ENCODE measurements at regions of chr1 and their contacts with region 1.

Region 1: DNA sequence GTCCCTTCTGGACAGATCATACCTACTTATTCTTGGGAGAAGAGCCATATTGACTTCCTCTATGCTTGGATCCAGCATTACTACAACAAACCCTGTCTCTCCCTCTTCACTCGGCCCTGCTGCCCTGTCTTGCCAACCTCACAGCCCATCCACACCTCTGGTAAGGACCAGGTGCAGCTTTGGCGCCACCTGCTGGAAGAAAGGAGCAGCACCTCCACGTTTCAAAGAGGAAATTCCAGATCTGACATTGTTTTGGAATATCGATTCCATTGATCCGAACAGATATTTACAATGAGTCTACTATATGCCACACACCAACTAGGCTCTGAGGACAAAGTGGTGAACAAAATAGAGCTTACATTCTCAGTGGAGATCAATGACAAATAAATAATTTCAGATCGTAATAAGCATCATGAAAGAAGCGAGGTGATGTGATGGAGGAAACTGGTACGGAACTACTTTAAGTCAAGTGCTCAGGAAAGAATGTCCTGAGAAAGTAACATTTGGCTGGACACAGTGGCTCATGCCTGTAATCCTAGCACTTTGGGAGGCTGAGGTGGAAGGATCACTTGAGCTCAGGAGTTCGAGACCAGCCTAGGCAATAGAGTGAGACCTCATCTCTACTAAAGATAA is 18.7 kb downstream of the MFSD2A start:
- DNase-seq: peak; percentile 78
- ATAC-seq: peak; percentile 69
- H3K4me3 Mint-ChIP-seq: no peak overlapping the region
- H3K27ac Mint-ChIP-seq: no peak overlapping the region
- H3K4me1 Mint-ChIP-seq: no peaks in the 10 kb centered on the region
- H3K27me3 Mint-ChIP-seq: no peaks in the 10 kb centered on the region

Region 2: DNA sequence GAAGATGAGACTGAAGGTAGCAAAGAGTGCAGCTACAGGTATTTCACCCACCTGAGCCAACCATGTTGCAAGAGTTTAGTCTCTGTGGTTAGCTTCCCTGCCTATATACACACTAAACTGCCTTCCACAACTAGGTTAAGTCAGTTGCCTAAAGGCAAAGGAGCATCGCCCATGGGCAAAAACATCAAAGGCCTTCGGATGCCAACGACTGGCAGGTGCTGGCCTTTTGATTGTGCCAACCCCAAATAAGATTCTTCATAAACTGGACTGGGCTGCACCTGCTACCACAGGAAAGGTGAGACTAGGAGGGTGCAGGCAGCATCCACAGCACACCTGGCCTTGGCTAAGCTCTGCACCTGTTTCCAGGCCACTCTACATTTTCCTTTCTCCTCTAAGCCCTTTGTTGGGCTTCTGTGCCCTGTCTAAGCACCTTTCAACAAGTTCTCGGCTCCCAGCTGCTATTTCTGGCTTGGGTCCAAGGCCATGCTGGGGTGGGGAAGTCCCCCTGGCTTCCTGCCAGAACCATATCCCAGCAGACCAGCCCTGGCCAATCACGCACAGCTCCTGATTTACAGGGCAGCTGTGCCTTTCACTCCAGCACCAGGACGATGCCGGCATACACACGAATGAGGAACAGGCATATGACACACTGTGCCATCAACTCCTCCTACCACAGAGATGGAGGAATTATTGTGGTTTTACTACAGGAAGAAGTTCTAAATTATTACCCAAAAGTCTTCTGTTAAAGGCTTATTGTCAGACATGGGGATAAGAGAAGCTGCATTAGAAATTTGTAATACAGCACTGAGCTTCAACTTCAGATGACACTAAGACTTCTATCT is 128.1 kb before region 1 on chr1:
- CTCF ChIA-PET with region 1: interaction called, 14 read pairs
- DNase-seq: peak; percentile 75
- ATAC-seq: peak; percentile 77
- H3K4me3 Mint-ChIP-seq: no peak overlapping the region
- H3K27ac Mint-ChIP-seq: peak overlapping the region; percentile 74
- H3K4me1 Mint-ChIP-seq: peaks cover 36% of the 10 kb centered on the region
- H3K27me3 Mint-ChIP-seq: no peaks in the 10 kb centered on the region

Region 3: GRCh38 chr1:39907528-39908453 is 65.8 kb before region 1 on chr1:
- CTCF ChIA-PET with region 1: interaction called, 28 read pairs
- DNase-seq: no peak
- ATAC-seq: no peak
- H3K4me3 Mint-ChIP-seq: no peak overlapping the region
- H3K27ac Mint-ChIP-seq: no peak overlapping the region
- H3K4me1 Mint-ChIP-seq: peaks cover 2% of the 10 kb centered on the region
- H3K27me3 Mint-ChIP-seq: peaks cover 52% of the 10 kb centered on the region

Region 4: DNA sequence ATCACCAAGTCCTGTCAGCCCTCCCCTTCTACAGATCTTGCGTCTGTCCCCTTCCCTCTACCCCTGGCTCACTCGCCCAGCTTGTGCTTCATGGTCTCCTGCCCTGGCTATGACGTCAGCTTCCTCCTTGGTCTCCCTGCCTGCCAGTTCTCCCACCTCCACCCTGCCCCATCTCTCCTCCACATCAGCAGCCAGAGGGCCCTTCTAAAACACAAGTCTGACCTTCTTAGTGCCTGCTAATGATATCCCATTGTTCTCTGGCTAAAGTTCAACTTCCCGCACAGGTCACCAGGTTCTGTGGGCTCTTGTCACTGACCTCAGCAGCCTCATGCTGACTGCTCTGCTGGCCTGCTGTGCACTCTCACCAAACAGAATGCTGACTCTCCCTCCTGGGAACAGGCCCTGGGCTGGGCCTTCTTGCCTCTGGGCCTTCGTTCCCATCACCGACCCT is 47.3 kb before region 1 on chr1:
- CTCF ChIA-PET with region 1: interaction called, 70 read pairs
- DNase-seq: no peak
- ATAC-seq: no peak
- H3K4me3 Mint-ChIP-seq: no peak overlapping the region
- H3K27ac Mint-ChIP-seq: no peak overlapping the region
- H3K4me1 Mint-ChIP-seq: peaks cover 4% of the 10 kb centered on the region
- H3K27me3 Mint-ChIP-seq: peaks cover 2% of the 10 kb centered on the region

Region 5: GRCh38 chr1:40032240-40032891 is 58.7 kb after region 1 on chr1:
- CTCF ChIA-PET with region 1: interaction called, 43 read pairs
- DNase-seq: peak; percentile 68
- ATAC-seq: peak; percentile 80
- H3K4me3 Mint-ChIP-seq: no peak overlapping the region
- H3K27ac Mint-ChIP-seq: no peak overlapping the region
- H3K4me1 Mint-ChIP-seq: peaks cover 31% of the 10 kb centered on the region
- H3K27me3 Mint-ChIP-seq: peaks cover 16% of the 10 kb centered on the region

Measured in activated CD8-positive, alpha-beta memory T cell treated with anti-CD3 and anti-CD28 coated beads, Interleukin-2, amount 10 ng/mL, durations not matched to agents 7 days and 5 days (primary cell).